Activated T-helper 2 cell treated with anti-CD3 and anti-CD28 coated beads, Interferon-gamma antibody, Interleukin-2, Interleukin-4, amounts not matched to agents 10 μg/mL and 5 μg/mL and 100 μg/mL, durations not matched to agents 14 hours and 24 hours and 36 hours (primary cell): ENCODE measurements at regions of chr3 and their contacts with region 1.

Region 1: DNA sequence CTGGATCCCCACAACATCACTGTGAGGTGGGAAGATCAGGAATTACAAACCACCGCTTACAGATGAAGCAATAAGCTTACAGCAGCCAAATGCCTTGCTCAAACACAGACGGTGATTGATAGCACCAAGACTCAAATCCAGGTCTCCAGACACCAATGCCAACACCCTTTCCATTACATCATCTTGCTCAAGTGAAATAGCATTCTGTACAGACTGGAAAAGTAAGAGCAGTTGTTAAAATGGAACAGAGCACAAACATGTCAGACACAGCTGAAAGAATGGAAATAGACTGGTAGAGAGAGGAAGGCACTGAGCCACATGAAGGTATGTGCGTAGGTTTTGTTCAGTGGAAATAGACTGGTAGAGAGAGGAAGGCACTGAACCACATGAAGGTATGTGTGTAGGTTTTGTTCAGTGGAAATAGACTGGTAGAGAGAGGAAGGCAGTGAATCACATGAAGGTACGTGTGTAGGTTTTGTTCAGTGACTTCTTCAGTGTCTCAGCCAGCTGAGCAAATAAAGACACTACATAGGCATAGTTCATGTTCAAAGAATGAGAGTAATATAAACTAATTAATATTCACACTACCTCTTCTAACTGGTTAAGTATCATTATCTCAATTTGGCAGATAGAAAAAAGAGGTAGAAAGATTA is 15.6 kb downstream of the CLDN1 start:
- DNase-seq: no peak
- H3K4me3 Mint-ChIP-seq: peak overlapping the region; percentile 11
- H3K27ac Mint-ChIP-seq: peak overlapping the region; percentile 85
- H3K4me1 Mint-ChIP-seq: peaks cover 35% of the 10 kb centered on the region
- H3K27me3 Mint-ChIP-seq: no peaks in the 10 kb centered on the region

Region 2: DNA sequence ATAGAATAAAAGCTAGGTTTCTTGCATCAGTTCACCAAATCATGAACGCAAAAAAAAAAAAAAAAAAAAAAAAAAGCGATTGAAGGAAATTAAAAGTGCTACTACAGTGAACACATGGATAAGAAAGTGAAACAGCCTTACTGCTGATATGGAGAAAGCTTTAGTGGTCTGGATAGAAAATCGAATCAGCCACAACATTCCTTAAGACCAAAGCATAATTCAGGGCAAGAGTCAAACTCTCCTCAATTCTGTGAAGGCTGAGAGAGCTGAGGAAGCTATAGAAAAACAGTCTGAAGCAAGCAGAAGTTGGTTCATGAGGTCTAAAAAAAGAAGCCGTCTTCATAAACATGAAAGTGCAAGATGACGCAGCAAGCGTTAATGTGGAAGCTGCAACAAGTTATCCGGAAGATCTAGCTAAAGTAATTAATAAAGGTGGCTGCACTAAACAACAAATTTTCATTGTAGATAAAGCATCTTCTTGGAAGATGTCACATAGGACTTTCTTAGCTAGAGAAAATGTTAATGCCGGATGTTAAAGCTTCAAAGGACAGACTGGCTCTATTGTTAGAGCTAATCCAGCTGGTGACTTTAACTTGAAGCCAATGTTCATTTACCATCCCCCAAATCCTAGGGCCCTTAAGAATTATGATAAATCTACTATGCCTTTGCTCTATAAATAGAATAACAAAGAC is 205.2 kb before region 1 on chr3:
- intact Hi-C with region 1: no loop called
- DNase-seq: no peak
- H3K4me3 Mint-ChIP-seq: peak overlapping the region; percentile 5
- H3K27ac Mint-ChIP-seq: no peak overlapping the region
- H3K4me1 Mint-ChIP-seq: peaks cover 3% of the 10 kb centered on the region
- H3K27me3 Mint-ChIP-seq: peaks cover 27% of the 10 kb centered on the region

Region 3: DNA sequence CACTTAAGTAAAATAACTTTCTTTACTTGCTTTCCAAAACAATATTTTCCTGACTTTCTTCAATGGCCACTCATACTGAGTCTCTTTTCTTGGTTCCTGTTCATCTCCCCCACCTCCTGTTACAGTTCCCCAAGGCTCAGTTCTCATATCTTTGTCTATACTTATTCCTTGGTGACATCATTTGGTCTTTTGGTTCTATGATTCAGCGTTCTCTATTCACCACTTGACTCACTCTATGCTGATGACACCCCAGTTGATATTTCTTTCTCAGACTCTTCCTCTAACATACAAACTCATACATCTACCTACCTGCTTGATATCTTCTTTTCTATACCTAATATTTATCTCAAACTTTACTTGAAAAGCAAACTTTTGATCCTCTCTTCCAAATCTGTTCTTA is 100.9 kb before region 1 on chr3:
- intact Hi-C with region 1: loop called (anchors 5 kb)
- DNase-seq: no peak
- H3K4me3 Mint-ChIP-seq: no peak overlapping the region
- H3K27ac Mint-ChIP-seq: peak overlapping the region; percentile 31
- H3K4me1 Mint-ChIP-seq: peaks cover 11% of the 10 kb centered on the region
- H3K27me3 Mint-ChIP-seq: peaks cover 9% of the 10 kb centered on the region

Region 4: DNA sequence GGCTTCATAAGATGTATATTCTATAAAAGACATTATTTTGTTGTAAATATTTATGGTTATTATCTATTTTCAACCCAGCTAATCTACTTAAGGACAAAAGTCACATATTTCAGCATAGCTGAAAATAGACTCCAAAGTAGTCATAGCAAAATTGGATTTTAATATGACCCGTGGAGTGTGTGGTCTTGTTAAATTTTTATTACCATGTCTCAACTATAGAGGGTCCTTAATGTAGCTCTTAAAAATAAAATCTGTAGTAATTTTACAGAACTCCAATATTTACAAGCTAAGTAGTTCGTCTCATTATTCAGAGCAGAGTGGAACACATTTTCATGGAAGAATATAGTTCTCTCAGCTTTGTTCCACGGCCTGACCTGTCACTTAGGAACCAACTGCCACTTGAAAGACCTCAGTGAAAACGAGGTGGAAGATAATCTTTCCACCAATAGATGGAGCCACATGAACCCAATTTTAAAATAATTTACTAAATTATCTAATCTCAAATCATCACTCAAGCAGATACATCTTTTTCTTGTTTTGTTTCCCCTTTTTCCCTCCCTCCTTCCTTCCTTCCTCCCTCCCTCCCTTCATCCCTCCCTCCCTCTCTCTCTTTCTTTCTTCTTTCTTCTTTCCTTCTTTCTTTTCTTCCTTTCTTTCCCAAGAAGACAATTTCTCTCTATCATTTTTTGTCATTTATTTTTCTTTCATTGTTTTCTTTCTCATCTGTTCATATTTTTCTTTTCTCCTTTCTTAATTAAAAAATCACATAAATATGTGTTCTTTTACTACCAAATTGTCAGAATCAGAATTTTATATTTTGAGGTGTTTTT is 81.6 kb before region 1 on chr3:
- intact Hi-C with region 1: loop called (anchors 5 kb)
- DNase-seq: no peak
- H3K4me3 Mint-ChIP-seq: no peak overlapping the region
- H3K27ac Mint-ChIP-seq: no peak overlapping the region
- H3K4me1 Mint-ChIP-seq: peaks cover 4% of the 10 kb centered on the region
- H3K27me3 Mint-ChIP-seq: peaks cover 4% of the 10 kb centered on the region

Region 5: GRCh38 chr3:190321789-190322603 is 15.4 kb after region 1 on chr3 and contains the start of gene CLDN1:
- intact Hi-C with region 1: loop called (anchors 1 kb)
- DNase-seq: peak; percentile 66
- H3K4me3 Mint-ChIP-seq: peak within 1 kb of the TSS; percentile 81
- H3K27ac Mint-ChIP-seq: peak within 1 kb of the TSS; percentile 5
- H3K4me1 Mint-ChIP-seq: peaks cover 51% of the 10 kb centered on the region
- H3K27me3 Mint-ChIP-seq: peaks cover 10% of the 10 kb centered on the region
- total RNA-seq, gene CLDN1: 5.7 and 6.0 TPM in 2 replicates

Region 6: DNA sequence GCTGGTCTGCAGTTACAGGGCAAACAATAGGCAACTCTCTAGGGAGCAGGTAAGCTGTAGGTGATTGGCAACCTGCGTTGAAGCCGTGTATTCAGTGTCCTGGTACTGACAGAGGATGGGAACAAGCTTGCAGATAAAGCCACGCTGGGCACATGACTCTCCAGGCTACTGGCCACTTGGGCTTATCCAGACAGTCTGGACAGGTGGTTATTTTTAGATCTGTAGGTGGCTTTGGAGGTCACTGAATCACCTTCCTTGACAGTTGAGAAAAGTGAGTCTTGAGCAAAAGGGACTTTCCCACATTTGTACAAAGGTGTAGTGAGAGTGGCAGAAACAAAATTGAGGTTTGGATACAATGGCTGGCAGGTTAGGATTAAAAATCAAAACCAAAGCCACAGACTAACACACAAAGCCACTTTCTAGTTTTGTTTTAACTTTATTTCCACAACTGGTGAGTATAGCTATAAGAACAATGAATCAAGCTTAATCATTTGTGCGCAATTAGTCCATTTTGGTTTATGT is 185.0 kb after region 1 on chr3:
- intact Hi-C with region 1: loop called (anchors 2 kb)
- DNase-seq: no peak
- H3K4me3 Mint-ChIP-seq: no peak overlapping the region
- H3K27ac Mint-ChIP-seq: no peak overlapping the region
- H3K4me1 Mint-ChIP-seq: peaks cover 35% of the 10 kb centered on the region
- H3K27me3 Mint-ChIP-seq: peaks cover 73% of the 10 kb centered on the region

Region 7: DNA sequence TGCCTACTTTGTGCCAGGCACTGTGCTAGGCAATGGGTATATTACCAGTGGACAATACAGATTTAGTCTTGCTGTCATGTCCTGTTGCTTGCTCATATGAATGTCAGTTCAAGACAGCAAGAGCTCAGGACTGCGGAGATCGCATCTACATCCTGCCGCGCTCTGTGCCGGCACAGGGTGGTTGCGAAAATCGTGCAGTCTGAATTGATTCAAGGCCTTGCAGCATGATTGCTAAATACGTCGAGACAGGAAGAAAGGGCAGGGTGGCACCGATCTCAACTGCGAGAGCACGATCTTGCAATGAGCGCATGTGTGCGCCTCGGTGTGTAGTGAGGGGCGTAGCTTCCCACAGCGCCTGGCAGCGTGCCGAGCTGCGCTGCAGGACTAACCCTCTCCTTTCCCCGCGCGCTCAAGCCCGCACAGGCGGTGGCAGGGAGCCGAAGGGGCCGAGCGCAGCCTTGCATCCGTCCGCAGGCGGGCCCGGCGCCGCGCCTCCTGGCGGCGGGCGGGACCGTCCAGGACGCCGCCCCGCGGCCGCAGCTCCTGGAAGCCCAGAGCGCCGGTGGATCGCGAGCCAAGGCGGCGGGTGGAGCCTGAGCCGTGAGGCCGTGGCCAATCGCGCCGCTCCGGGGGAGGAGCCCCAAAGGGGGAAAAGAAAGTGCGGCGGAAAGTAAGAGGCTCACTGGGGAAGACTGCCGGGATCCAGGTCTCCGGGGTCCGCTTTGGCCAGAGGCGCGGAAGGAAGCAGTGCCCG is 206.9 kb after region 1 on chr3 and contains the start of gene IL1RAP:
- intact Hi-C with region 1: loop called (anchors 10 kb)
- DNase-seq: peak; percentile 89
- H3K4me3 Mint-ChIP-seq: peak within 1 kb of the TSS; percentile 90
- H3K27ac Mint-ChIP-seq: peak within 1 kb of the TSS; percentile 97
- H3K4me1 Mint-ChIP-seq: peaks cover 39% of the 10 kb centered on the region
- H3K27me3 Mint-ChIP-seq: no peaks in the 10 kb centered on the region
- total RNA-seq, gene IL1RAP: 34.5 and 38.6 TPM in 2 replicates

Region 8: DNA sequence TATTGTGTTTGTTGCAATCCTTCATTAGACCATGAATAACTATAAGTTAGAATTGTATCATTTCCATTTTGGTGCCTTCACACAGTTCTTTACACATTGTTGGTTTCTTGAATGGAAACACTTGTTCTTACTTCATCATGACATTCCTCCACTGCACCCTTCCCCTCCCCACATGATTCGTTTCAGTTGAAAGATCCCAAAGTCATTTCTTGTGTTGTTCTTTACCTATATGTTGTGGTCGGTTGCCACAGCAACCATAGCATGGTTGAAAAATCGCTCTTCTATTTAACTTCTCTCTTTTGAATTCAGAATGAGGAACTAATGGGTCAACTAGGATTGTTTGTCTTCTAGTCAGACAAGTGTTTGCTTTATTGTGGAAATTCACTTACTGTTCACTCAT is 310.5 kb after region 1 on chr3:
- intact Hi-C with region 1: loop called (anchors 1 kb)
- DNase-seq: peak; percentile 50
- H3K4me3 Mint-ChIP-seq: peak overlapping the region; percentile 40
- H3K27ac Mint-ChIP-seq: peak overlapping the region; percentile 97
- H3K4me1 Mint-ChIP-seq: peaks cover 77% of the 10 kb centered on the region
- H3K27me3 Mint-ChIP-seq: no peaks in the 10 kb centered on the region